Activated CD4-positive, alpha-beta memory T cell treated with anti-CD3 and anti-CD28 coated beads for 36 hours (primary cell): ENCODE measurements at regions of chr2 and their contacts with region 1.

Region 1: GRCh38 chr2:168490015-168490874 is 34.2 kb downstream of the CERS6 start:
- DNase-seq: peak; percentile 78
- H3K4me3 Mint-ChIP-seq: peak overlapping the region; percentile 65
- H3K27ac Mint-ChIP-seq: peak overlapping the region; percentile 89
- H3K4me1 Mint-ChIP-seq: peaks cover 40% of the 10 kb centered on the region
- H3K27me3 Mint-ChIP-seq: peaks cover 7% of the 10 kb centered on the region

Region 2: DNA sequence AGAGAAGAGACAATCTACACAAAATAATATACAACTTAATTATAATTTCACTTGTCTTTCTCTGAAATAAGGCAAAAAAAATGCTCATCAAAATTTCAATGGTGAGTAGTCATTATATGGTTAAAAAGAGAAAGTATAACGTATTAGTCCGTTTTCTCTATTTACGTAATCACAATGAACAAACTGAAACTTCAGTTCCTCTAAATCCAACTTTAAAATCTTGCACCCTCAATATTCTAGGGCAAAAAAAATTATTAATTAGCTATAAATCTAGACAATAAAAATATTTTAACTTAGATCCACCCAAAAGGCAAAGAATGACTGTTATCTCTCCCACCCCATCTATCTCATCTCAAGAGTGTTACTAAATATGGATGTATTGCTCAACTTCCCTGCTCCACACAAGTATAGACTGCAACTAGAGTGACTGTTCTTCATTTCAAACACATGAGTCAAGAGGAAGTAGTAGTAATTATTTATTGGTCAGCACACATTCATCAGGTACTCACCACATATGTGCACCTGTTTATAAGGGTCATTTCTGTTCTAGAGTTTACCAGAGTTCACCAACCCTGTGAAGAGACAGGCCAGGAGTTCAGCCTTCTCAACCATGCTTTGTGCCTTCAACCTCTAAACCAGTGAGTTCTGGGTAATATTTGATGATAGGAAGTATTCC is 279.2 kb before region 1 on chr2:
- CTCF ChIA-PET with region 1: interaction called, 4 read pairs
- POLR2A ChIA-PET with region 1: interaction called, 15 read pairs
- intact Hi-C with region 1: loop called (anchors 1 kb)
- DNase-seq: no peak
- H3K4me3 Mint-ChIP-seq: peak overlapping the region; percentile 54
- H3K27ac Mint-ChIP-seq: peak overlapping the region; percentile 98
- H3K4me1 Mint-ChIP-seq: peaks cover 78% of the 10 kb centered on the region
- H3K27me3 Mint-ChIP-seq: no peaks in the 10 kb centered on the region

Region 3: DNA sequence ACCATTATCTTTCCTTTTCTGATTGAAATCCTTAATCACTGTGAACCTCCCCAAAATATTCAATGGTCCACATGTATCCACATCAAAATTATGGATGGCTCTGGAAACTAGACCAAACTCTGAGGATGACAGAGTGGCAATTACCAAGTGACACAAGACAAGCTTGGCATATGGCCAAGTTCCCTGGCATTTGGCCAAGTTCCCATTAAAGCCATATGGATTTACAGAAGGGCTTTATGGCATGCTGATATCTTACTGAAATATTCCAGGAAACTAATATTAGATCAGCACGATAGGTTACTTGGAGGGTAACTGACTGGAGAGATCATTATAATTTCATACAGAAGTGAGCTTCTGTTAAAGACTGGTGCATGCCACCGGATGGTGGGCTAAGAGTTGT is 56.1 kb before region 1 on chr2:
- CTCF ChIA-PET with region 1: interaction called, 3 read pairs
- POLR2A ChIA-PET with region 1: interaction called, 16 read pairs
- intact Hi-C with region 1: loop called (anchors 1 kb)
- DNase-seq: no peak
- H3K4me3 Mint-ChIP-seq: no peak overlapping the region
- H3K27ac Mint-ChIP-seq: no peak overlapping the region
- H3K4me1 Mint-ChIP-seq: peaks cover 35% of the 10 kb centered on the region
- H3K27me3 Mint-ChIP-seq: no peaks in the 10 kb centered on the region

Region 4: GRCh38 chr2:168687314-168687713 is 197.1 kb after region 1 on chr2:
- CTCF ChIA-PET with region 1: interaction called, 5 read pairs
- POLR2A ChIA-PET with region 1: interaction called, 6 read pairs
- intact Hi-C with region 1: loop called (anchors 1 kb)
- DNase-seq: no peak
- H3K4me3 Mint-ChIP-seq: no peak overlapping the region
- H3K27ac Mint-ChIP-seq: no peak overlapping the region
- H3K4me1 Mint-ChIP-seq: peaks cover 6% of the 10 kb centered on the region
- H3K27me3 Mint-ChIP-seq: no peaks in the 10 kb centered on the region

Region 5: DNA sequence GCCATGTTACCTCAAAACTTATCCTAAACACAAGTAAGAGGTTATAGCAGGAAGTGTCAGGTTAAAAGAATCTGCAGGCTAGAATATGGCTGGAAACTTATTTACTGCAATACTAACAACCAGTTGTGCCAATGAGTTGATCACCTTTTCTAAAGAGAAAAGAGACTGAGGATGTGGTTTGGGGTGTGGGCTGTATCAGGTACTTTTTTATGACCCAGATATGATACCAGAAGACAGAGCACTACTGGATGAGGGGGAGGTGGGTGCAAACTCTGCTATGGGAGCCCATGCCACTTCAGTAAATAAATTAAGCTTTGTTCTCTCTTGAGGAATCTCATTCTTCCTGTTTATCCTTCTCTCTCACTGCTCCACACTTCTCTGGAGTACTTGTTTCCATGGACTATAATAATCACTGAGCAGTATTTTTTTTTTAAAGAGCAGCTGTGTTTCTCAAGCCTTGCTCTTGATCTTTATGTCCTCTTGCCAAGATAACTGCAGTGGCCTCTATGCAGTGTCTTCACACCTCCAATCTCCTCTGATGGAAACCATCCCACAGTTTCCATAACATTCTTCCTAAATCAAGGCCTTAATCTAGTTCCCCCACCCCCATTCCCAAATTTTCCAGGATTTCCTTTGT is 261.0 kb after region 1 on chr2:
- CTCF ChIA-PET with region 1: no interaction called
- POLR2A ChIA-PET with region 1: no interaction called
- intact Hi-C with region 1: loop called (anchors 2 kb)
- DNase-seq: peak; percentile 49
- H3K4me3 Mint-ChIP-seq: no peak overlapping the region
- H3K27ac Mint-ChIP-seq: peak overlapping the region; percentile 3
- H3K4me1 Mint-ChIP-seq: peaks cover 62% of the 10 kb centered on the region
- H3K27me3 Mint-ChIP-seq: no peaks in the 10 kb centered on the region